ENCODE measurements at regions of chr11 and their contacts with region 1.

Region 1: DNA sequence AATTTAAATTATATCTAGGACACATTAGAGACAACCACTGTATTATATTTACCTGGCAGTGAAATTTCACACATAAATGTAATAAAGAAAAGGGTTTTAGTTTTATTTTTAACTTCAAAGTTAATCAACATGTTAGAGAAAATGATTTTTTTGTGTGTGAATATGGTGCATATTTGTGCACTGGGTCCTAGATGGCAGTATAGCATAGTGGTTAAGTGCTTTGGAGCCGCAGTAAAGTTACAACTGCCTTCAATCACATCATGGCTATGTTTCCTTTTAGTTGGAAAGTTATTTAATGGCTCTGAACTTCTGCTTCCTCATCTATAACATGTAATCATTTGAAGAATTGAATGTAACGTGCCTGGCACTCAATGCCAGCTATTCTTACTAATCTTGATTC is 108.9 kb upstream of the DDI1 start:
- DNase-seq: no peak
- ATAC-seq: peak; percentile 39; the same call in 2 of the 3 replicates
- H3K4me3 ChIP-seq: no peak overlapping the region
- H3K27ac ChIP-seq: no peak overlapping the region
- H3K4me1 ChIP-seq: peaks cover 23% of the 10 kb centered on the region
- H3K27me3 ChIP-seq: no peaks in the 10 kb centered on the region
- CTCF ChIP-seq: peak; percentile 57 to 75 (median 71)
- EP300 ChIP-seq: no peak
- POLR2A ChIP-seq: no peak
- RAD21 ChIP-seq: peak; percentile 82

Region 2: GRCh38 chr11:103682318-103683184 is 245.0 kb before region 1 on chr11:
- CTCF ChIA-PET with region 1: interaction called, 7 read pairs
- POLR2A ChIA-PET with region 1: no interaction called
- RAD21 ChIA-PET with region 1: no interaction called
- SMC1A ChIA-PET with region 1: interaction called, 3 read pairs
- in situ Hi-C with region 1: no loop called
- intact Hi-C with region 1: loop called (anchors 2 kb)
- DNase-seq: peak; percentile 26
- ATAC-seq: peak; percentile 96
- H3K4me3 ChIP-seq: no peak overlapping the region
- H3K27ac ChIP-seq: no peak overlapping the region
- H3K4me1 ChIP-seq: no peaks in the 10 kb centered on the region
- H3K27me3 ChIP-seq: peaks cover 0 to 2% of the 10 kb centered on the region in 2 experiments; a peak in 1 of 4 replicates
- CTCF ChIP-seq: peak; percentile 68 to 88 (median 81)
- EP300 ChIP-seq: no peak
- POLR2A ChIP-seq: no peak
- RAD21 ChIP-seq: peak; percentile 90

Region 3: DNA sequence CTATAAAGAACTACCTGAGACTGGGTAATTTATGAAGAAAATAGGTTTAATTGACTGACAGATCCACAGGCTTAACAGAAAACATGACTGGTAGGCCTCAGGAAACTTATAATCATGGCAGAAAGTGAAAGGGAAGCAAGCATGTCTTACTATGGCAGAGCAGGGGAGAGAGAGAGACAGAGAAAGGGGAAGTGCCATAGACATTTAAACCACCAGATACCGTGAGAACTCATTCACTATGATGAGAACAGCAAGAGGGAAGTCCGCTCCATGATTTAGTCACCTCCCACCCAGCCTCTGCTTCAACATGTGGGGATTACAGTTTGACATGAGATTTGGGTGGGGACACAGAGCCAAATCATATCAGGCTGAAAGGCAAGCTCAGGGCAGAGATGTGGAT is 218.2 kb before region 1 on chr11:
- CTCF ChIA-PET with region 1: no interaction called
- POLR2A ChIA-PET with region 1: no interaction called
- RAD21 ChIA-PET with region 1: no interaction called
- SMC1A ChIA-PET with region 1: no interaction called
- in situ Hi-C with region 1: no loop called
- intact Hi-C with region 1: no loop called
- DNase-seq: no peak
- ATAC-seq: peak; percentile 50; the same call in 2 of the 3 replicates
- H3K4me3 ChIP-seq: no peak overlapping the region
- H3K27ac ChIP-seq: no peak overlapping the region
- H3K4me1 ChIP-seq: no peaks in the 10 kb centered on the region
- H3K27me3 ChIP-seq: no peaks in the 10 kb centered on the region
- CTCF ChIP-seq: no peak
- EP300 ChIP-seq: no peak
- POLR2A ChIP-seq: no peak
- RAD21 ChIP-seq: no peak

Region 4: DNA sequence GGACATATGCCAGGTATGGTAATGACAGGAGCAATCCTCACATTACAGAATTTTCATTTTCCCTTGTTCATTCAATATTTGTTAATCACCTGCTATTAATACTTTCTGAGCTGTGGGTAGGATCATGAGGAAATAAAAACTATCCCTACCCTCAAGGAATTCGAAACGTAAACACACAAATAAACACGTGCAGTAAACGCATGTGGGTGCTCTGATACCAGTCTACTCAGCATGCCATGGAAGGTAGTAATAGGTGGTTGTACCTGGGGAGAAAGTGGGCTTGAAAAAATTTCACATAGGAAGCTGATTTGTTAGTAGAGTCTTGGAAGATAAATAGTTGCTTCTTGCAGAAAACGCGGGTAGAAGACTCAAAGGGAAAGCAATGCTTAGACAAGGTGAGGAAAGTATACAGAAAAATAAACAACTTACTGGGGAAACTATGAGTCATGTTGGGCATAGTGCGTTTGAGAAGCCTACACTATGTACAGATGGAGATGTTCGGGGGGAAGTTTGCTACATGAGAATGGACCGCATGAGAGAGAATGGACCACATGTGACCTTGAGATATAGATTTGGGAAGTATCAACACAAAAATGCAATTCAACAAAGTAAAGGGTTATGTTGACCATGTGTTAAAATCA is 22.1 kb after region 1 on chr11:
- CTCF ChIA-PET with region 1: no interaction called
- POLR2A ChIA-PET with region 1: interaction called, 4 read pairs
- RAD21 ChIA-PET with region 1: interaction called, 3 read pairs
- SMC1A ChIA-PET with region 1: interaction called, 16 read pairs
- in situ Hi-C with region 1: no loop called
- intact Hi-C with region 1: no loop called
- DNase-seq: no peak
- ATAC-seq: no peak
- H3K4me3 ChIP-seq: no peak overlapping the region
- H3K27ac ChIP-seq: no peak overlapping the region
- H3K4me1 ChIP-seq: no peaks in the 10 kb centered on the region
- H3K27me3 ChIP-seq: no peaks in the 10 kb centered on the region
- CTCF ChIP-seq: no peak
- EP300 ChIP-seq: no peak
- POLR2A ChIP-seq: no peak
- RAD21 ChIP-seq: no peak

Region 5: GRCh38 chr11:104151404-104152204 is 224.1 kb after region 1 on chr11:
- CTCF ChIA-PET with region 1: interaction called, 3 read pairs
- POLR2A ChIA-PET with region 1: no interaction called
- RAD21 ChIA-PET with region 1: no interaction called
- SMC1A ChIA-PET with region 1: interaction called, 5 read pairs
- in situ Hi-C with region 1: loop called (anchors 5 kb)
- intact Hi-C with region 1: loop called (anchors 1 kb)
- DNase-seq: no peak
- ATAC-seq: no peak
- H3K4me3 ChIP-seq: no peak overlapping the region
- H3K27ac ChIP-seq: no peak overlapping the region
- H3K4me1 ChIP-seq: no peaks in the 10 kb centered on the region
- H3K27me3 ChIP-seq: no peaks in the 10 kb centered on the region
- CTCF ChIP-seq: peak; percentile 16 to 45 (median 30); a peak in 3 of 6 replicates
- EP300 ChIP-seq: no peak
- POLR2A ChIP-seq: no peak
- RAD21 ChIP-seq: peak; percentile 52; the same call in 1 of the 2 replicates

Region 6: GRCh38 chr11:104222464-104222863 is 294.9 kb after region 1 on chr11:
- CTCF ChIA-PET with region 1: no interaction called
- POLR2A ChIA-PET with region 1: no interaction called
- RAD21 ChIA-PET with region 1: interaction called, 3 read pairs
- SMC1A ChIA-PET with region 1: no interaction called
- in situ Hi-C with region 1: no loop called
- intact Hi-C with region 1: loop called (anchors 10 kb)
- DNase-seq: no peak
- ATAC-seq: peak; percentile 50
- H3K4me3 ChIP-seq: no peak overlapping the region
- H3K27ac ChIP-seq: no peak overlapping the region
- H3K4me1 ChIP-seq: no peaks in the 10 kb centered on the region
- H3K27me3 ChIP-seq: no peaks in the 10 kb centered on the region
- CTCF ChIP-seq: no peak
- EP300 ChIP-seq: no peak
- POLR2A ChIP-seq: no peak
- RAD21 ChIP-seq: no peak